Upper lobe of right lung (tissue), 1 donor: ENCODE measurements at regions of chr4 and their contacts with region 1.

Region 1: GRCh38 chr4:1463088-1463926 is 57.1 kb upstream of the NKX1-1 start:
- DNase-seq: peak; percentile 45
- ATAC-seq: no peak
- H3K4me3 ChIP-seq: no peak overlapping the region
- H3K27ac ChIP-seq: no peak overlapping the region
- H3K4me1 ChIP-seq: no peaks in the 10 kb centered on the region
- H3K27me3 ChIP-seq: peaks cover 53% of the 10 kb centered on the region
- CTCF ChIP-seq: no peak

Region 2: DNA sequence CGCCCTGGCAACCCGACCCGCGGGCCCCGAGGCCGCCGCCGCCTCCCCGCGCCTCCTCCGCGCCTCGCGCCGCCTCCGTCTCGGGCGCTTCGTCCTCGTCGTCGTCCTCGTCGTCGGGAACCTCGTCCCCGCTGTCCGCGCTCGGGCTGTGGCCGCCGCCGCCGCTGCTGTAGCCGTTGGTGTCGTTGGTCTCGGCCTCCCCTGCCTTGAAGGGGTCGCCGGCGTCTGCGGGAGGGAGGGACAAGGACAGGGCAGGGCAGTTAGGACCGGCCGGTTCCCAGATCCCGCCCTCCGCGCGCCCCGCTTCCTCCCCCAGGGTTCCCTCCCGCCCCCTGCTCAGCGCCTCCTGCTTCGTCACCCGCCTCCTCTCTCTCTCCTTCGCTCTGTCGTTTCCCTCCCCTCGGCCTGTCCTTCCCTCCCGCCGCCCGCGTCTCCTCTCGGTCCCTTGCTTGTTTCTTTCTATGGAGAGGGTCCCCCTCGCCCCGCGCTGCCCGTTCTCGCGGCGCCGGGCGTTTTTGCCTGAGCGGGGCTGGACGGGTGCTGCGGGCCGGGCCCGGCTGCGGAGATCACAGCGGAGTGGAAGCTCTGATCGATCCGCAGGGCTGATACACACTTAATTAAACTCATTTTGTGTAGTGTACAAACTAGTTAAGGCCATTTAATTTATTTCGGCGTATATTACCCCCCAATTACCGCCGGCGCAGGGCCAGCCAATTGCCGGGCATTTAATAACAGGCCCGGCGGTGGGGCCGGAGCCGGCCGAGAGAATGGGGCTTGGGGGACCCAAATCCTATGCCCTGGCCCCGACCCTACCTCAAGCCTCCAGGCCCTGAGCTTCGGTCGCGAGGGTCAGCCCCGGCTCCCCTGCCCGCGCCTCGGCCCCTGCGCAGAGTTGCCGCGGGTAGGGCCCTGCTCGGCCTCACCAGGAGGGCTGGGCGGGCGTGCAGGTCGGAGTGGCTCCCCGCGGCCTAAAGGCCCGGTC is 59.4 kb before region 1 on chr4:
- intact Hi-C with region 1: loop called (anchors 10 kb)
- DNase-seq: peak; percentile 63
- ATAC-seq: no peak
- H3K4me3 ChIP-seq: no peak overlapping the region
- H3K27ac ChIP-seq: no peak overlapping the region
- H3K4me1 ChIP-seq: peaks cover 5% of the 10 kb centered on the region
- H3K27me3 ChIP-seq: peaks cover 81% of the 10 kb centered on the region
- CTCF ChIP-seq: no peak

Region 3: DNA sequence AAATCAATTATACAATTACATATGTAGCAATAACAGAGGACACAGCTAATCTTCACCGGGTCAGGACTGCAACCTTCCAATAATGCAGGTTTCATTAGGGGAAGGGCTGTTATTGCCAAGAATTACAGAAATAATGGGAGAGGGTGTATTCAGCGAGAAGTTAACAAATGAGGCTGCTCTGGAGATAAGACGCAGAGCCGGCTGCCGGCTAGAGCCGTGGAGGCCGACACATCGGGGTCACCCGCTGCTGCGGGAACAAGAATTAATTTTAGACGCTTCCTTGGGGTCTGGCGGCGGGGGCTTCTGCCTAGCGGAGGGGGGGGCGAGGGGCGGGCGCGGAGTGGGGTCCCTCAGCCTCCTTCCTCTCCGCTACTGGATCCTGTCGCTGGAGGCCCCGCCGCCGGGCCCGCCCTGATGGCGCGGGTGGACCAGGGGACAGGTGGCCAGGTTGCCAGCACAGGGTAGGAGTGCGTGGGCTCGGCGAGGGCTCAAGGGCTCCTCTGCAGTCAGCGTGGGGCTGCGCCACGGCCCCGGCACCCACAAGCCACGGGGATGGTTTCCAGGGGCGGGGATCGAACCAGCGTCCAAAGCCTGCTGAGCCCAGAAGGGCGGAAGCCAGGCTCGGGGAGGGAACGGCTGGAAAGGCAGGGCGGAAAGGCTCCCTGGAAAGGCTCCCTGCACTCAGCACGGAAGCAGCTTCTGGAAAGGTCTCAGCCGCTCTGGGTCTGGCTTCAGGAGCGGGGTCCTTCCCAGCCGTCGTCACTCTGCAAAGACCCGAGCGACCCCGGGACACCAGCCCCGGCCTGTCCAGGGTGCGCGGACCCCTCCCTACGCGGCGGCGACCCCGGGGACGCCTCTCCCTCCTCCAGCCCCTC is 56.7 kb after region 1 on chr4:
- intact Hi-C with region 1: no loop called
- DNase-seq: peak; percentile 65
- ATAC-seq: no peak
- H3K4me3 ChIP-seq: no peak overlapping the region
- H3K27ac ChIP-seq: no peak overlapping the region
- H3K4me1 ChIP-seq: peaks cover 3% of the 10 kb centered on the region
- H3K27me3 ChIP-seq: peaks cover 36% of the 10 kb centered on the region
- CTCF ChIP-seq: no peak

Region 4: DNA sequence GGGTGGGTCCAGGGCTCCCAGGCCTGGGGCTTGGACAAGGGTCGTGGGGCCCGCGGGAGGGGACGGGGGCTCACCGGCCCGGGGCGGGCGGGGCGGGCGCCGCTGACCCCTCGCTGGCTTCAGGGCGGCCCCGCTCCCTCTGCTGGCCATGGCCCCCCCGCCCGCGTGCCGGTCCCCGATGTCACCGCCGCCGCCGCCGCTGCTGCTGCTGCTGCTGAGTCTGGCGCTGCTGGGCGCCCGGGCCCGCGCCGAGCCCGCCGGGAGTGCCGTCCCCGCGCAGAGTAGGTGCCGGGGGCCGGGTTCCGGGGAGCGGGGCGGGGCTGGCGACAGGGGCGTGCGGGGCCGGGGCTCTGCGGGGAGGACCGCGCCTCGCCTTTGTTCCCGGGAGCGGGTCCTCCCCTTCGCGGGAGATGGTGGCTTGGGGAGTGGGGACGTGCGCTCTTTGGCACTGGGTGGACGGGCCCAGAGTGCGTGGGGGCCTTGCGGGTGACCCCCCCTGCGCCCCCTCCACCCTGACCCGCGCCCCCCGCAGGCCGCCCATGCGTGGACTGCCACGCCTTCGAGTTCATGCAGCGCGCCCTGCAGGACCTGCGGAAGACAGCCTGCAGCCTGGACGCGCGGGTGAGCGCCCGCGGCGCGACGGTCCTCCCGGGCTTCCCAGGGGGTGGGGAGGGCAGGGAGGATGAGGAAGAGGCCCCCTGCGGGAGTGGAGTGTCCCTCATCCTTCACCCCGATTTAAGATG is 579.1 kb after region 1 on chr4:
- intact Hi-C with region 1: no loop called
- DNase-seq: peak; percentile 69
- ATAC-seq: peak; percentile 41
- H3K4me3 ChIP-seq: peak overlapping the region; percentile 66
- H3K27ac ChIP-seq: no peak overlapping the region
- H3K4me1 ChIP-seq: peaks cover 18% of the 10 kb centered on the region
- H3K27me3 ChIP-seq: peaks cover 54% of the 10 kb centered on the region
- CTCF ChIP-seq: no peak